ENCODE measurements at regions of chr14 and their contacts with region 1.

Region 1: DNA sequence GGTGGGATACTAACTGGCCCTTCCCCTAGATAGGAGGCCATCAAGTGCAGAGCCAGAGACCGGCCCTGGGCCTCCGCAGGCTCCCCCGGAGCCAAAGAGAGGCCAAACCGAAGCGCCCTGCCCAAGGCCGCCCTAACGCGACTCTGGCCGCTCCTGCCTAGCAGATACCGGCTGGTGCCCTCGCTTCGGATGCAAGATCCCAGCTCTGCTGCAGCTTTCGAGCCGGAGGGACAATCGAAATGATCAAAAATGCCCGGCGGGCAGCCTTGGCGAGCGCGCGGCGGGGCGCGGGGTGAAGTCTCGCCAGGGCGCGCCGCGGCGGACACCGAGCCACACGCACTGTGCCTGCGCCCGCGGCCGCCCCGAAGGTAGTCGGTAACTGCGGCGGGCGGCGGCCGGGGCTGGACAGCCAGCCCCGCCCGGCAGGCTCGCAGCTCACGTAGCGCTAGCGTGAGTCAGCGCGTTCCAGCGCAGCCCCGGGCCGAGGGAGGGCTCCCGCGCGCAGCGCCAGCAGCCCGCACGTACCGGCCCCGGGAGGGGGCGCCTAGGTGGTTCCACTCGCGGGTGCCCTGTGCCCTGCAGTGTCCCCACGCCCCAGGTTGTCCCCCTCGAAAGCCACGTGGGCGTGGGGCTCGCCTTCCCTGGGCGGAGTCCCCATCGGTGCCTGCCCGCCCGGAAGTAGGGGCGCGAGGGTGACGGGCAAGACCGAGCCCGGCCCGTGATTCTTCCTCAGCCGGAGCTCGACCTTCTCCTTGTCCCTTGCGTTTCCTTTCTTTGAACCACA is 109.2 kb upstream of the EGLN3 start:
- DNase-seq: peak; percentile 46 to 79
- H3K4me3 ChIP-seq: peak overlapping the region; percentile 68
- H3K27ac ChIP-seq: peak overlapping the region; percentile 68
- H3K4me1 ChIP-seq: peaks cover 24% of the 10 kb centered on the region; the same call in 1 of the 2 replicates
- H3K27me3 ChIP-seq: no peaks in the 10 kb centered on the region
- CTCF ChIP-seq: no peak; the same call in 1 of the 2 replicates

Region 2: GRCh38 chr14:32121948-32122347 is 1938.1 kb before region 1 on chr14:
- CTCF ChIA-PET with region 1: interaction called, 12 read pairs
- POLR2A ChIA-PET with region 1: no interaction called
- intact Hi-C with region 1: no loop called
- DNase-seq: no peak
- H3K4me3 ChIP-seq: no peak overlapping the region
- H3K27ac ChIP-seq: no peak overlapping the region
- H3K4me1 ChIP-seq: no peaks in the 10 kb centered on the region
- H3K27me3 ChIP-seq: no peaks in the 10 kb centered on the region
- CTCF ChIP-seq: no peak

Region 3: GRCh38 chr14:33950320-33951182 is 109.5 kb before region 1 on chr14 and contains the start of gene EGLN3:
- CTCF ChIA-PET with region 1: interaction called, 7 read pairs
- POLR2A ChIA-PET with region 1: interaction called, 6 read pairs
- intact Hi-C with region 1: loop called (anchors 2 kb)
- DNase-seq: peak; percentile 71 to 90
- H3K4me3 ChIP-seq: peak within 1 kb of the TSS; percentile 82
- H3K27ac ChIP-seq: peak within 1 kb of the TSS; percentile 73
- H3K4me1 ChIP-seq: peaks cover 27% of the 10 kb centered on the region
- H3K27me3 ChIP-seq: no peaks in the 10 kb centered on the region
- CTCF ChIP-seq: no peak
- total RNA-seq, gene EGLN3: 22.6 and 23.6 TPM in 2 replicates

Region 4: GRCh38 chr14:34035177-34035933 is 24.7 kb before region 1 on chr14:
- CTCF ChIA-PET with region 1: no interaction called
- POLR2A ChIA-PET with region 1: interaction called, 11 read pairs
- intact Hi-C with region 1: no loop called
- DNase-seq: peak in 1 of 2 experiments; percentile 47
- H3K4me3 ChIP-seq: no peak overlapping the region
- H3K27ac ChIP-seq: no peak overlapping the region
- H3K4me1 ChIP-seq: peaks cover 10% of the 10 kb centered on the region; the same call in 1 of the 2 replicates
- H3K27me3 ChIP-seq: no peaks in the 10 kb centered on the region
- CTCF ChIP-seq: no peak

Region 5: GRCh38 chr14:34136996-34137745 is 77.1 kb after region 1 on chr14:
- CTCF ChIA-PET with region 1: no interaction called
- POLR2A ChIA-PET with region 1: interaction called, 19 read pairs
- intact Hi-C with region 1: no loop called
- DNase-seq: no peak
- H3K4me3 ChIP-seq: no peak overlapping the region
- H3K27ac ChIP-seq: no peak overlapping the region
- H3K4me1 ChIP-seq: peaks cover 11% of the 10 kb centered on the region; the same call in 1 of the 2 replicates
- H3K27me3 ChIP-seq: no peaks in the 10 kb centered on the region
- CTCF ChIP-seq: no peak